Dorsolateral prefrontal cortex (tissue), 120 donors: ENCODE measurements at regions of chr1 and their contacts with region 1.

Region 1: GRCh38 chr1:44786138-44786840 is 1.7 kb downstream of the BEST4 start:
- DNase-seq: peak in 2 of 10 donors; percentile 49 to 69
- H3K4me3 ChIP-seq: peak overlapping the region; percentile 42 to 73 (median 63)
- H3K27ac ChIP-seq: peak overlapping the region in 34 of 59 donors; percentile 4 to 78 (median 42)
- H3K27me3 ChIP-seq: no peaks in the 10 kb centered on the region
- CTCF ChIP-seq: peak; percentile 66 to 99 (median 92)

Region 2: GRCh38 chr1:44571712-44572571 is 214.3 kb before region 1 on chr1:
- intact Hi-C with region 1: no loop called
- DNase-seq: peak in 2 of 10 donors; percentile 28 to 50
- H3K4me3 ChIP-seq: no peak overlapping the region
- H3K27ac ChIP-seq: peak overlapping the region in 57 of 59 donors; percentile 41 to 100 (median 93)
- H3K27me3 ChIP-seq: no peaks in the 10 kb centered on the region
- CTCF ChIP-seq: peak in 55 of 56 donors; percentile 23 to 74 (median 55)

Region 3: GRCh38 chr1:44819608-44820327 is 33.5 kb after region 1 on chr1:
- intact Hi-C with region 1: loop called in 1 of 2 experiments (anchors 5 kb)
- DNase-seq: peak in 9 of 10 donors; percentile 49 to 72 (median 64)
- H3K4me3 ChIP-seq: peak overlapping the region; percentile 33 to 80 (median 63)
- H3K27ac ChIP-seq: peak overlapping the region; percentile 83 to 99 (median 96)
- H3K27me3 ChIP-seq: no peaks in the 10 kb centered on the region
- CTCF ChIP-seq: peak in 31 of 56 donors; percentile 4 to 49 (median 16)